ENCODE measurements at regions of chr17 and their contacts with region 1.

Region 1: GRCh38 chr17:43576563-43577229 is 30.6 kb upstream of the ETV4 start:
- DNase-seq: peak; percentile 78
- H3K4me3 Mint-ChIP-seq: no peak overlapping the region
- H3K27ac Mint-ChIP-seq: no peak overlapping the region
- H3K4me1 Mint-ChIP-seq: peaks cover 15% of the 10 kb centered on the region
- H3K27me3 Mint-ChIP-seq: no peaks in the 10 kb centered on the region

Region 2: GRCh38 chr17:43442711-43443110 is 134.0 kb before region 1 on chr17:
- CTCF ChIA-PET with region 1: no interaction called
- intact Hi-C with region 1: no loop called
- DNase-seq: no peak
- H3K4me3 Mint-ChIP-seq: no peak overlapping the region
- H3K27ac Mint-ChIP-seq: no peak overlapping the region
- H3K4me1 Mint-ChIP-seq: no peaks in the 10 kb centered on the region
- H3K27me3 Mint-ChIP-seq: no peaks in the 10 kb centered on the region

Region 3: GRCh38 chr17:43562679-43563599 is 13.8 kb before region 1 on chr17:
- CTCF ChIA-PET with region 1: interaction called, 11 read pairs
- intact Hi-C with region 1: no loop called
- DNase-seq: no peak
- H3K4me3 Mint-ChIP-seq: no peak overlapping the region
- H3K27ac Mint-ChIP-seq: no peak overlapping the region
- H3K4me1 Mint-ChIP-seq: peaks cover 4% of the 10 kb centered on the region
- H3K27me3 Mint-ChIP-seq: peaks cover 22% of the 10 kb centered on the region

Region 4: GRCh38 chr17:43673516-43674323 is 97.0 kb after region 1 on chr17:
- CTCF ChIA-PET with region 1: interaction called, 4 read pairs
- intact Hi-C with region 1: loop called (anchors 1 kb)
- DNase-seq: peak; percentile 87
- H3K4me3 Mint-ChIP-seq: no peak overlapping the region
- H3K27ac Mint-ChIP-seq: no peak overlapping the region
- H3K4me1 Mint-ChIP-seq: peaks cover 19% of the 10 kb centered on the region
- H3K27me3 Mint-ChIP-seq: no peaks in the 10 kb centered on the region

Region 5: GRCh38 chr17:43760254-43760852 is 183.7 kb after region 1 on chr17:
- CTCF ChIA-PET with region 1: interaction called, 21 read pairs
- intact Hi-C with region 1: loop called (anchors 2 kb)
- DNase-seq: peak; percentile 98
- H3K4me3 Mint-ChIP-seq: no peak overlapping the region
- H3K27ac Mint-ChIP-seq: no peak overlapping the region
- H3K4me1 Mint-ChIP-seq: no peaks in the 10 kb centered on the region
- H3K27me3 Mint-ChIP-seq: peaks cover 21% of the 10 kb centered on the region

Region 6: GRCh38 chr17:43846221-43846712 is 269.6 kb after region 1 on chr17:
- CTCF ChIA-PET with region 1: interaction called, 11 read pairs
- intact Hi-C with region 1: no loop called
- DNase-seq: peak; percentile 85
- H3K4me3 Mint-ChIP-seq: no peak overlapping the region
- H3K27ac Mint-ChIP-seq: no peak overlapping the region
- H3K4me1 Mint-ChIP-seq: no peaks in the 10 kb centered on the region
- H3K27me3 Mint-ChIP-seq: peaks cover 8% of the 10 kb centered on the region